ENCODE measurements at regions of chr22 and their contacts with region 1.

Region 1: GRCh38 chr22:43993027-43993760 is 30.9 kb upstream of the PARVB start:
- DNase-seq: peak; percentile 78
- ATAC-seq: peak; percentile 97
- H3K4me3 Mint-ChIP-seq: no peak overlapping the region
- H3K27ac Mint-ChIP-seq: no peak overlapping the region
- H3K4me1 Mint-ChIP-seq: no peaks in the 10 kb centered on the region
- H3K27me3 Mint-ChIP-seq: no peaks in the 10 kb centered on the region
- CTCF ChIP-seq: peak; percentile 93

Region 2: GRCh38 chr22:43955040-43955882 is 37.9 kb before region 1 on chr22 and contains the start of gene SAMM50:
- CTCF ChIA-PET with region 1: interaction called, 10 read pairs
- POLR2A ChIA-PET with region 1: no interaction called
- DNase-seq: peak; percentile 91
- ATAC-seq: peak; percentile 88
- H3K4me3 Mint-ChIP-seq: peak within 1 kb of the TSS; percentile 95
- H3K27ac Mint-ChIP-seq: peak within 1 kb of the TSS; percentile 89
- H3K4me1 Mint-ChIP-seq: peaks cover 29% of the 10 kb centered on the region
- H3K27me3 Mint-ChIP-seq: no peaks in the 10 kb centered on the region
- CTCF ChIP-seq: no peak
- total RNA-seq, gene SAMM50: 59.3 to 72.1 TPM (median 62.1 TPM) in 3 replicates

Region 3: GRCh38 chr22:44068422-44069191 is 75.4 kb after region 1 on chr22:
- CTCF ChIA-PET with region 1: interaction called, 11 read pairs
- POLR2A ChIA-PET with region 1: no interaction called
- DNase-seq: no peak
- ATAC-seq: no peak
- H3K4me3 Mint-ChIP-seq: no peak overlapping the region
- H3K27ac Mint-ChIP-seq: peak overlapping the region; percentile 80; the same call in 1 of the 2 replicates
- H3K4me1 Mint-ChIP-seq: peaks cover 11% of the 10 kb centered on the region
- H3K27me3 Mint-ChIP-seq: no peaks in the 10 kb centered on the region
- CTCF ChIP-seq: no peak

Region 4: DNA sequence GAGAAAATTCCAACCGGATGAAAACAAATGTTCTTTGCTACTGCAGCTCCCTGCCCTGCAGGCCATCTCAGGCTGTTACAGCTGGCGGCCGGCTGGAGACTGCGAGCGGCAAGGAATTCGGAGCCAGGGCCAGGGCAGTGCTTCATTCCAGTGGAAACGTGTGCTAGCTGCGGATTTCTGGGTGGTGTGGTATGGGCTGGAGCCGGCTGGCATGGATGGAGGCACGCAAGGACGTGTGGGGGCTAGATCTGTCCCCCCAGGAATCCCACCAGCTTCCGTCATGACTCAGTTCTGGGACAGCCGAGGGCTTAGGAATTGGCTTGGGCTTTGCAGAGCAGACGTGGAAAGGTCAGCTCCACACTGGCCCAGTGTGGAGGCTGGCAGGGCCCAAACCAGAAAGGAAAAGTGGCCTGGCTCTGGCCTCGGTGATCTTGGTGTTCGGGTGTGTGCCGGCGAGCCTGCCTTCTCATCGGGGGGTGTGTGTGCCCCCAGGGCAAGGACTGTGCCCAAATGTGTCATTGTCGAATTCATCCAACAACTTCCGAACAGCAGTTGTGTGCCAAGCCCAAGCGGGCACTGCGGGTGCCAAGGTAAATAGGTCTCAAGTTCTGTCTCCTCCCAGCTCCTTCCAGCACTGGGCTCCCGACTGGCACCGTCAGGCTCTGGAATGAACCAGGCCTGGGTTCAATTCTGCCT is 367.6 kb after region 1 on chr22:
- CTCF ChIA-PET with region 1: interaction called, 17 read pairs
- POLR2A ChIA-PET with region 1: no interaction called
- DNase-seq: no peak
- ATAC-seq: no peak
- H3K4me3 Mint-ChIP-seq: no peak overlapping the region
- H3K27ac Mint-ChIP-seq: no peak overlapping the region
- H3K4me1 Mint-ChIP-seq: peaks cover 11% of the 10 kb centered on the region; the same call in 1 of the 2 replicates
- H3K27me3 Mint-ChIP-seq: no peaks in the 10 kb centered on the region
- CTCF ChIP-seq: no peak

Region 5: GRCh38 chr22:44389181-44389580 is 396.0 kb after region 1 on chr22:
- CTCF ChIA-PET with region 1: interaction called, 11 read pairs
- POLR2A ChIA-PET with region 1: no interaction called
- DNase-seq: peak; percentile 9
- ATAC-seq: no peak
- H3K4me3 Mint-ChIP-seq: no peak overlapping the region
- H3K27ac Mint-ChIP-seq: no peak overlapping the region
- H3K4me1 Mint-ChIP-seq: peaks cover 10% of the 10 kb centered on the region
- H3K27me3 Mint-ChIP-seq: no peaks in the 10 kb centered on the region
- CTCF ChIP-seq: no peak